Gastrocnemius medialis (tissue), 4 donors: ENCODE measurements at regions of chr16 and their contacts with region 1.

Region 1: DNA sequence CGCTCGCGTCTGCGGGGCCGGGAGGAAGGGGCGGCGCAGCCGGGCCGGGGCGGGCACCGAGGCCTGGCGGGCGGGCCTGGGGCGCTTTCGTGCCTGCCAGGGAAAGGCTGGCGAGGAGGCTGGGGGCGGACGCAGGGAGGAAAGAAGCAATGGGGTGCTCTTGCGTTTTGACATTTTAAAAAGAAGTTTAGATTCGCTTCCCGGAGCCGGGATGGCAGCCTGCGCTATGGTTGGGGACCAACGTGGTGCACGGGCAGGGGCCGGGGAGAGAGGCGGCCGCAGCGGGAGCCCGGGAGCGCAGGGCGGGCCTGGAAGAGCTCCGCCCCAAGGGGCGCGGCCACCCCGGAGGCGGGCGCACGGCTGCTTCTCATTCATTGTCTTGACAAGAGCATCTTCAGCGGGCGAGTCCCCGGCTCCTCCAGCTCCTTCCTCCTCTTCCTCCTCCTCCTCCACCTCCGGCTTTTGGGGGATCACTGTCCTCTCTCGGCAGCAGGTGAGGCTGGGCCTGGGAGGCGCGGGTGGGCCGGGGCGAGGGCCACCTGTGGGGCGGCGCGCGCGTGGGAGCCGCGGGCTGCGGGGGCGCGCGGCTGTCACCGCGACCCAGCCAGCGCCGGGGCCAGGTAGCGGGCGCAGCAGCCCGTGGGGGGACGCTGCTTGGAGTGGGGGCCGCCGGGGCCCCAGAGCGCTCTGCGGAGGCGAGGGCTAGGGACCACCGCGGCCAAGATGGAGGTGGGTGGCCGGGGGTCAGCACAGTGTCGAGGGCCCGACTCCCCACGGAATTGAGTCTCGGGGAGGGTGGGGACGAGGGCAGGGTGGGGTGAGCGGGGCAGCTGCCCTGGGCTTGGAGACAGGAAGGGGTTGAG is at the start of gene CORO1A:
- DNase-seq: peak; percentile 72 to 75
- ATAC-seq: peak; percentile 83 to 88
- H3K4me3 ChIP-seq: peak within 1 kb of the TSS; percentile 55 to 74 (median 59)
- H3K27ac ChIP-seq: peak within 1 kb of the TSS; percentile 45 to 75 (median 58)
- H3K4me1 ChIP-seq: peaks cover 3 to 7% of the 10 kb centered on the region in 2 donors
- H3K27me3 ChIP-seq: no peaks in the 10 kb centered on the region
- CTCF ChIP-seq: no peak
- POLR2A ChIP-seq: peak; percentile 9 to 23
- total RNA-seq, gene CORO1A: 0.44 to 8.9 (median 5.8) TPM

Region 2: DNA sequence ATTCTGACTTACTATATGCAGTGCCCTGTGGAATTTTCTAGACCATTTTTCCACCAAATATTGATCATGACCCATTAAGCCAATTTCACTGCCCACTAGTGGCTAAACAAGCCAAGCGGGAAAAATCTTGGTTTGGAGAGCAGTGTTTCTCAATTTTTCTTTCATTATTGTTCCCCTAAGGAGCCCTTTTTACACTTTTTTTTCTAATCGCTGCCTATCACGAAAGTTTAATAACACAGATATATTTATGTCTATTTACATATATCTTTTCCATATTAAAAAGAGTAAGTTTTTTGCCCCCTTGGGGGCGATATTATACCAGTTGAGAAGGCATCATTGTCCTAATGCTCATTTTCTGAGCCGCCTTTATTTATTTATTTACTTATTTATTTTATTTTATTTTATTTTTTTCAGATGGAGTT is 141.6 kb before region 1 on chr16:
- in situ Hi-C with region 1: loop called in 1 of 4 experiments (anchors 10 kb)
- intact Hi-C with region 1: no loop called
- DNase-seq: no peak
- ATAC-seq: no peak
- H3K4me3 ChIP-seq: no peak overlapping the region
- H3K27ac ChIP-seq: no peak overlapping the region
- H3K4me1 ChIP-seq: no peaks in the 10 kb centered on the region
- H3K27me3 ChIP-seq: no peaks in the 10 kb centered on the region
- CTCF ChIP-seq: peak in 3 of 5 experiments; percentile 34 to 65 (median 48)
- POLR2A ChIP-seq: no peak

Region 3: GRCh38 chr16:30104494-30104968 is 78.9 kb before region 1 on chr16:
- in situ Hi-C with region 1: loop called in 1 of 4 experiments (anchors 10 kb)
- intact Hi-C with region 1: no loop called
- DNase-seq: no peak
- ATAC-seq: no peak
- H3K4me3 ChIP-seq: no peak overlapping the region
- H3K27ac ChIP-seq: no peak overlapping the region
- H3K4me1 ChIP-seq: no peaks in the 10 kb centered on the region
- H3K27me3 ChIP-seq: no peaks in the 10 kb centered on the region
- CTCF ChIP-seq: no peak
- POLR2A ChIP-seq: no peak